Testis (tissue), 5 donors: ENCODE measurements at regions of chr4 and their contacts with region 1.

Region 1: GRCh38 chr4:151260526-151260925 is 16.4 kb upstream of the PRSS48 start:
- DNase-seq: no peak
- H3K4me3 ChIP-seq: no peak overlapping the region
- H3K27ac ChIP-seq: no peak overlapping the region
- H3K4me1 ChIP-seq: peaks cover 3% of the 10 kb centered on the region
- H3K27me3 ChIP-seq: no peaks in the 10 kb centered on the region
- CTCF ChIP-seq: no peak
- POLR2A ChIP-seq: no peak

Region 2: DNA sequence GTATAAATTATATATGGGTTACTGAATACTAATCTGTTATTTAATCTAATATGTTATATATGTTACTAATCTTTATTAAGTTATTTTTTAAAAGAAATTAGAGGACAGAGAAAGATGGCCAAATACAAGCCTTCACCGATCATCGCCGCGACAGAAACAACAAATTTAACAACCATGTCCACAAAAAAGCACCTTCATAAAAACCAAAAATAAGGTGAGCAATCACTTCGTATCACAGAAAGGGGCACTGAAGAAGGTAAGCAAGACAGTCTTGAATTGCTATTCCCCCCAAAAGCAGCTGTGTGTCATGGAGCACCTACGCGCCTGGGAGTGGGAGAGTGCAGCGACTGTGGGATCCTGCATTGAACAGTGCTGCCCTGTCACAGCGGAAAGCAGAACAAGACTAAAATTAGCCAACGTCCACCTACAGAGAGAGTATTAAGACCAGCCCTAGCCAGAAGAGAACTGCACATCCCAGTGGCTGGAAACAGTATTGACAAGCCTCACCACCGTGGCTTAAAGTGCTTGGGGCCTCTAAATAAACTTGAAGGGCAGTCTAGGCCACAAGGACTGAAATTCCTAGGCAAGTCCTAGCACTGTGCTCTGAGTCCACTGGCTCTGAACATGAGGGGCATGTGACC is 283.9 kb before region 1 on chr4:
- intact Hi-C with region 1: no loop called
- DNase-seq: no peak
- H3K4me3 ChIP-seq: no peak overlapping the region
- H3K27ac ChIP-seq: no peak overlapping the region
- H3K4me1 ChIP-seq: no peaks in the 10 kb centered on the region
- H3K27me3 ChIP-seq: no peaks in the 10 kb centered on the region
- CTCF ChIP-seq: no peak
- POLR2A ChIP-seq: no peak

Region 3: DNA sequence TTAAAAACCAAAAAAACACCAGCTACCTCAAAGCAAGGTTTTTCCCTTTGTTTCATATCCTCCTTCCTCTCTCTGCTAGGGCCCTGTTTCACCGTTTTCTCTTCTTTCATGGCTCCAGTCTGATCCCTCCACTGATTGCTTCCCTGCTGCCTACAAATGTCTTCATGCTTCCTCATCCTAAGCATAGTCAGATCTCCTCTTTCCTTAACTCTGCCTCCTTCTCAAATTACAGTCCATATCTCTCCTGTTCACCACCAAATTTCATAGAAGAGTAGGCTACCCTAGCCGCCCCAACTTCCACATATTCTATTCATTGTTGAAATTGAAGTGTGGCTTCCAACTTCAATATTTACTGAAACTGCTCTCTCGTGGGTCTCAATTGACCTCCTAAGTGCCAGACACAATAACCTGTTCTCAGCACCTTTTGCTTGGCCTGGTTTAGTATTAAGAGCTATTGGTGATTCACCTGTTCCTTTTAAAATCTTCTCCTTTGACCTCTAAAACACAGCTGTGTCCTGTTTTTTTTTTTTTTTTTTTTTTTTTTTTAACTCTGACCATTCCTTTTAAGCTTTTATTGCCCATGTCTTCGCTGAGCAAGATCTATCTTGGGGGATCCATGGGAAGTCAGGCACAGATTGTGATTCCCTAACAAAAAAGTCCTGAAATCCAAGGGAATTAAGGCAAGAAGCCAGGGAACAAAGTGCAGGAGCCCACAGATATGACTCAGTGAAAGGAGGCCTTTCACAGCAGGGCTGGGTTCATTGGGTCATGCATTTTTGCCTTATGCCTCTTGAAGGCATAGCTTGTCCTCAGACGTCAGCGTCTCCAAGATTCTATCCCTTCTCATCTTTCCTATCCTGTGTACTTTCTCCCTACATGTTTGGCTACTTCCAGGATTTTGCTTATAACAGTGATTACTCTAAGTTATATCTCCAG is 75.7 kb before region 1 on chr4:
- intact Hi-C with region 1: loop called (anchors 5 kb)
- DNase-seq: no peak
- H3K4me3 ChIP-seq: no peak overlapping the region
- H3K27ac ChIP-seq: no peak overlapping the region
- H3K4me1 ChIP-seq: no peaks in the 10 kb centered on the region
- H3K27me3 ChIP-seq: no peaks in the 10 kb centered on the region
- CTCF ChIP-seq: no peak
- POLR2A ChIP-seq: no peak

Region 4: DNA sequence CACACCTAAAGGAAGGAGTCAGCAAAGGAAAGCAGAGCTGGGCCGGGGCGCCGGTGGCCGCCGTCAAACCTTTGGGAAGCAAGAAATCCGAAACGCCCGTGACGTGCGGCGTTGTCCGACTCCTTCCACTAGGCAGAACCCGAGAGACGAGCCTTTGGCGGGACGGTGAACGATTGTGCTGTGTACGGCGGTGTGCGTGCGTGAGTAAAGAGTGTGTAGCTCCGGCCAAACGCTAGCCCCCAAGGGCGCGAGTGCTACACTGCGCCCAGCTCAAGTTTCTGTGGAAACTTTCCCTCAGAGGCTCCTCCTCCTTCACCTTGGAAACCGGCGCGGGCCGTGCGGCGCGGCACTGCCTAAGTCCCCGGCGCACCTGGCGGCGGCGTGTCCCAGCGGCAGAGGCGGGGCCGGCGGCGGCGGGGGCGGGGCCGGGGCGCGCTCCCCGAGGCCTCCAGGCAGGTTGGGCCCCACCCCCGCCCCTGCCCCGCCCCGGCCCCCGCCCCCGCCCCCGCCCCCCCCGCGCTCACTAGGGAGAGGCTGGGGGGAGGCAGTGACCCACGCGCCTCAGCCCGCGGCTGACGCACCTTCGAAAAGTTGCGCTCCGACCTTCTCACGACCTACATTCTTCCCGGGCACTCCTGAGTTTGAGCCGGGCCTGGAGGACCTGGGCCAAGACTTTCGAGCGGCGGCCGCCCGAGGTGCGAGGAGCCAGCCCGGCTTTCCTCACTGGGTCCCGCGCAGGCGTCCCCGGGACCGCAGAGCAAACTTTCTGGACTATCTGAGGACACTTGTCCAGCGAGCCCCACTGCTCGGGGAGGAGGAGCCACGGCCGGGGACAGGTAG is 148.3 kb after region 1 on chr4 and contains the start of gene FHIP1A:
- intact Hi-C with region 1: no loop called
- DNase-seq: peak; percentile 87
- H3K4me3 ChIP-seq: peak within 1 kb of the TSS; percentile 52 to 59
- H3K27ac ChIP-seq: peak within 1 kb of the TSS in 1 of 2 donors; percentile 8
- H3K4me1 ChIP-seq: peaks cover 5% of the 10 kb centered on the region
- H3K27me3 ChIP-seq: no peaks in the 10 kb centered on the region
- CTCF ChIP-seq: no peak
- POLR2A ChIP-seq: no peak
- total RNA-seq, gene FHIP1A: 13.1 to 16.2 TPM